Activated T-helper 1 cell treated with anti-CD3 and anti-CD28 coated beads, Interleukin-12 subunit alpha, Interleukin-12 subunit beta, Interleukin-2, Interleukin-4 antibody, amounts not matched to agents 30 ng/mL and 10 ng/mL and 1 ng/mL, durations not matched to agents 14 hours and 24 hours and 36 hours (primary cell): ENCODE measurements at regions of chr2 and their contacts with region 1.

Region 1: GRCh38 chr2:8719528-8719927 is 37.7 kb downstream of the ID2 start:
- DNase-seq: no peak
- H3K4me3 Mint-ChIP-seq: no peak overlapping the region
- H3K27ac Mint-ChIP-seq: no peak overlapping the region
- H3K4me1 Mint-ChIP-seq: no peaks in the 10 kb centered on the region
- H3K27me3 Mint-ChIP-seq: peaks cover 3% of the 10 kb centered on the region

Region 2: DNA sequence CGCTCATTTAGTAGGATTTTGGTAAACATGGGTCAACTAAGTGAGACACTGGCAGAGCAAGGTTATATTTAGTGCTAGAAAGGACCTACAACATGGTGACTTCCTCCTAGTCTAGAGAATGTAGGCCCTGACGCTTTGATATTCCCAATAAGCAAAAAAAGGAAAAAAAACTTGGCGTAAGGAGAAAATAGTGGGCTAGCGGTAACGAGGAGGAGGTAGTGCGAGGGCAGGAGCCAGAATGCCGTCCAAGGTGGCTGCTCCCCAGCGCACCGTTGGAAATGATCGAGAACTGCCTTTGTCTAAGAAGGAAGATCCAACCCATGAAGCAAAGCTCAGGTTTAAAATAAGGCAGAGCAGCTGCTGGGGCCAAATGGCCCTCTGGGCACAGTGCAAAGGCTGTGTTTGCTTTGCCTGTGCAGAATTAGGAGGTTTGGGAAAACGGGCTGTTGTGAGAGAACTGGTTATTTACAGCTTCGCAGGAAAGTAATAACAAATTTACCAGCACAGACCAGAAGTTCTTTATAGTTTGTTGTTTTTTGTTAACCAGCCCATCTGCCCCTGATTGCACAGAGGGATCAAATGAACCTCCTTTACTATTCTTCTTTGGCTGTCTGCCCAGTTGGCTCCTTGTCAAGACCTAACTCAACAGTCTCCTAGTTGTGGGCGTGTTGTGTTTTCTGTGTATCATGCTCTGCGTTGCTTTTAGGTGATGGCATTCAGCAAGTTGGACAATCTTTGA is 617.2 kb after region 1 on chr2:
- intact Hi-C with region 1: loop called (anchors 5 kb)
- DNase-seq: no peak
- H3K4me3 Mint-ChIP-seq: no peak overlapping the region
- H3K27ac Mint-ChIP-seq: no peak overlapping the region
- H3K4me1 Mint-ChIP-seq: no peaks in the 10 kb centered on the region
- H3K27me3 Mint-ChIP-seq: peaks cover 8% of the 10 kb centered on the region